Natural killer cell (primary cell): ENCODE measurements at regions of chr21 and their contacts with region 1.

Region 1: GRCh38 chr21:39388038-39388810 is 39.3 kb upstream of the HMGN1 start:
- DNase-seq: peak; percentile 86 to 92
- ATAC-seq: peak; percentile 80 to 87 (median 80)
- H3K4me3 ChIP-seq: peak overlapping the region; percentile 40
- H3K4me3 Mint-ChIP-seq: peak overlapping the region; percentile 92
- H3K27ac ChIP-seq: peak overlapping the region; percentile 3
- H3K27ac Mint-ChIP-seq: peak overlapping the region; percentile 75 to 81
- H3K4me1 ChIP-seq: peaks cover 32% of the 10 kb centered on the region
- H3K4me1 Mint-ChIP-seq: peaks cover 20 to 25% of the 10 kb centered on the region in 2 donors
- H3K27me3 ChIP-seq: no peaks in the 10 kb centered on the region
- H3K27me3 Mint-ChIP-seq: no peaks in the 10 kb centered on the region
- CTCF ChIP-seq: peak; percentile 89

Region 2: DNA sequence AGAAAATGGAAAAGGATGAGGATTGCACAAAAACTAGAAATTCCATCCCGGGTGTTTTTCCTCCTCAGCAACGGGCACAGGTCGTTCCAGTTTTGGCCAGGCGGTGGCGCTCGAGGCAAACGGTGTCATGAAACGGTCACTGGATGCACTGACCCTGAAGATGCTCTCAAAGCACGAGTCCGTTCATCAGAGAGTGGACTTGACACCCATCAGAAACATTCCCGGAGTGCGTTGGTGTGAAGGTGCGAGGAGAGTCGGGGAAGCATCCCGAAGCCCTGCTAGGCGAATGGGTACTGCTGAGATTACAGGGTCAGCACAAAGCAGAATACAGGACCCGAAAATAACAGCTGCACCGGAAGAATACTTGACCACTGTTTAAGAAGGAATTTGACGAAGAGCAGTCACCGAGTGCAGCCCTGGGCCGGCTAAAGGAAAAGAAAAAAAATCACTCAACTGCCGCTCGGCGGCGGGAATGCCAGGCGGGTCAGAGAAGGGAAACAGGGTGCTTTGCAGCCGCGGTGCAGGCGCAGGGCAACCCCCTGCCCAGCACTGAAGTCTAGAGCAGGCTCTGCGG is 654.2 kb before region 1 on chr21:
- intact Hi-C with region 1: loop called (anchors 5 kb)
- DNase-seq: peak; percentile 74 to 75
- ATAC-seq: peak; percentile 67 to 81 (median 79)
- H3K4me3 ChIP-seq: no peak overlapping the region
- H3K4me3 Mint-ChIP-seq: peak overlapping the region; percentile 60
- H3K27ac ChIP-seq: no peak overlapping the region
- H3K27ac Mint-ChIP-seq: no peak overlapping the region
- H3K4me1 ChIP-seq: peaks cover 6% of the 10 kb centered on the region
- H3K4me1 Mint-ChIP-seq: peaks cover 7 to 8% of the 10 kb centered on the region in 2 donors
- H3K27me3 ChIP-seq: peaks cover 17% of the 10 kb centered on the region
- H3K27me3 Mint-ChIP-seq: peaks cover 31 to 33% of the 10 kb centered on the region in 2 donors
- CTCF ChIP-seq: peak; percentile 97

Region 3: GRCh38 chr21:39183237-39184007 is 204.8 kb before region 1 on chr21 and contains the start of gene PSMG1:
- intact Hi-C with region 1: loop called (anchors 1 kb)
- DNase-seq: peak; percentile 92 to 96
- ATAC-seq: peak; percentile 88 to 98 (median 91)
- H3K4me3 ChIP-seq: peak within 1 kb of the TSS; percentile 83
- H3K4me3 Mint-ChIP-seq: peak within 1 kb of the TSS; percentile 98
- H3K27ac ChIP-seq: peak within 1 kb of the TSS; percentile 81
- H3K27ac Mint-ChIP-seq: peak within 1 kb of the TSS; percentile 93 to 95
- H3K4me1 ChIP-seq: peaks cover 8% of the 10 kb centered on the region
- H3K4me1 Mint-ChIP-seq: peaks cover 29 to 48% of the 10 kb centered on the region in 2 donors
- H3K27me3 ChIP-seq: no peaks in the 10 kb centered on the region
- H3K27me3 Mint-ChIP-seq: no peaks in the 10 kb centered on the region
- CTCF ChIP-seq: no peak
- total RNA-seq, gene PSMG1: 11.3 to 12.1 (median 12.0) TPM

Region 4: DNA sequence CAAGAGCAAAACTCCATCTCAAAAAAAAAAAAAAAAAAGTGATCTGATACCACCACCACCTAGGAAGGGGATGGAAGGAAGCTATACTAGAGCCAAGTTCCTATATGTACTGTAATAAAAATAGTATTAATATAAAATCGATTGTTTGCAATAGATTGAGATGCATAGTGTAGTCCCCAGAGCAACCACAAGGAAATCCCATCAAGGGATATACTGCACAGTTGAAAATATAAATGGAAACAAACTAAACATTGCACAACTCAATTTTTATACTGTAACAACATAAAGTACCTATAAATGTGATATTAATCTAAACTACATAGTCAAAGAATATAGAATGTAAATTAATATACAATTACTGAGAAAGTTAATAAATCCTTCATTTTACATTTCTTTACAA is 184.1 kb before region 1 on chr21:
- intact Hi-C with region 1: loop called (anchors 2 kb)
- DNase-seq: no peak
- ATAC-seq: no peak
- H3K4me3 ChIP-seq: no peak overlapping the region
- H3K4me3 Mint-ChIP-seq: no peak overlapping the region
- H3K27ac ChIP-seq: no peak overlapping the region
- H3K27ac Mint-ChIP-seq: no peak overlapping the region
- H3K4me1 ChIP-seq: no peaks in the 10 kb centered on the region
- H3K4me1 Mint-ChIP-seq: no peaks in the 10 kb centered on the region
- H3K27me3 ChIP-seq: no peaks in the 10 kb centered on the region
- H3K27me3 Mint-ChIP-seq: no peaks in the 10 kb centered on the region
- CTCF ChIP-seq: no peak

Region 5: DNA sequence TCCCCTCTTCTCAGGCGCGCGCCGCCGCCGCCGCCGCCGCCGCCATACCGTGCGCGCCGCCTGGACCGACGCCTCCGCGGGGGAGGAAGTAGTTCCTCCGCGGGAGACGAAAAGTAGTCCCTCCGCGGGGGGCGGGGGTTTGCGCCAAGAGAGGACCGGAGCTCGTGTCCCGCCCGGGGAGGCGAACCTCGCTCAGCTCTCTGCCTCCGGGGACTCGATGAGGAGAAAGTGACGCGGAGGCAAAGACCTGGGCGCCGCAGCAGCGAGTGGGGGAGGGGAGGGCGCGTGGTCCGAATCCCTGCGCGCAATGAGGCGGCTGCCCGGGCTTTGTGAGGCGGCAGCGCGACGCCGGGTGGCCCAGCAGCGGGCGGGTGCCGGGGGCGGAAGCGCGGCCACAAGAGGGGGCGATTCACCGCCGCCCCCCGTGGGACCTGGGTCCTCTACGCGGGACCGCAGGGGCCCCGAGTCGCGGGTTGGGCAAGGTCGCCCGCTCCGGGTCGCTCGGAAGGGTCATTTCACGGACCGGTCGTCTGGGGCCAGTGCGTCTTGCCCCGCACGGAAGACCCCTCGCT is 74.6 kb before region 1 on chr21 and contains the start of gene BRWD1:
- intact Hi-C with region 1: loop called (anchors 2 kb)
- DNase-seq: peak; percentile 81 to 92
- ATAC-seq: peak; percentile 55 to 79 (median 62)
- H3K4me3 ChIP-seq: peak within 1 kb of the TSS; percentile 88
- H3K4me3 Mint-ChIP-seq: peak within 1 kb of the TSS; percentile 96
- H3K27ac ChIP-seq: peak within 1 kb of the TSS; percentile 83
- H3K27ac Mint-ChIP-seq: peak within 1 kb of the TSS; percentile 92 to 97
- H3K4me1 ChIP-seq: peaks cover 10% of the 10 kb centered on the region
- H3K4me1 Mint-ChIP-seq: peaks cover 29 to 38% of the 10 kb centered on the region in 2 donors
- H3K27me3 ChIP-seq: no peaks in the 10 kb centered on the region
- H3K27me3 Mint-ChIP-seq: no peaks in the 10 kb centered on the region
- CTCF ChIP-seq: peak; percentile 31
- total RNA-seq, gene BRWD1: 92.0 to 93.8 (median 93.3) TPM

Region 6: GRCh38 chr21:39349211-39350093 is 38.8 kb before region 1 on chr21:
- intact Hi-C with region 1: loop called (anchors 2 kb)
- DNase-seq: peak; percentile 98
- ATAC-seq: peak; percentile 78 to 91 (median 82)
- H3K4me3 ChIP-seq: peak overlapping the region; percentile 94
- H3K4me3 Mint-ChIP-seq: peak overlapping the region; percentile 94
- H3K27ac ChIP-seq: peak overlapping the region; percentile 93
- H3K27ac Mint-ChIP-seq: peak overlapping the region; percentile 89 to 90
- H3K4me1 ChIP-seq: peaks cover 6% of the 10 kb centered on the region
- H3K4me1 Mint-ChIP-seq: peaks cover 31 to 34% of the 10 kb centered on the region in 2 donors
- H3K27me3 ChIP-seq: no peaks in the 10 kb centered on the region
- H3K27me3 Mint-ChIP-seq: peaks cover 6% of the 10 kb centered on the region in 2 donors
- CTCF ChIP-seq: no peak

Region 7: DNA sequence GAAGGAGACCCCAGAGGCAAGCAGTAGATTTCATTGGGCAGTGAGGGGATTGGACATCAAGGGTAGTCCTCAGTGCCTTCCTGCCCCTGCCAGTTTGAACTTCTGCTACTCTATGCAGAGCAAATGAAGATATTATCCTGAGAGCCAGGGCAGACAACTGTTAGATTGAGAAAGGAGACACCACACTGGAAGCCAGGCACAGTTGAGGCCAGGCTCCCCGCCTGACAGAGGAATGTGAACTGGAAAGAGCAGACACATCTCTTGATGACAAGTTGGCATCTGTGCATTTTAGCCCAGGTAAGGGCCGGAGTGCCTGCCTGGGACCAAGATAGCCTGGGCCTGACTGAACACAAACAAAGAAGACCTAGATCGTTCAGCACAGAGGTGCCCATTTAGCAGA is 79.5 kb after region 1 on chr21:
- intact Hi-C with region 1: no loop called
- DNase-seq: no peak
- ATAC-seq: peak in 1 of 3 donors; percentile 17
- H3K4me3 ChIP-seq: no peak overlapping the region
- H3K4me3 Mint-ChIP-seq: no peak overlapping the region
- H3K27ac ChIP-seq: no peak overlapping the region
- H3K27ac Mint-ChIP-seq: no peak overlapping the region
- H3K4me1 ChIP-seq: no peaks in the 10 kb centered on the region
- H3K4me1 Mint-ChIP-seq: no peaks in the 10 kb centered on the region
- H3K27me3 ChIP-seq: no peaks in the 10 kb centered on the region
- H3K27me3 Mint-ChIP-seq: peaks cover 0 to 10% of the 10 kb centered on the region in 2 donors
- CTCF ChIP-seq: no peak